ENCODE measurements at regions of chr2 and their contacts with region 1.

Region 1: DNA sequence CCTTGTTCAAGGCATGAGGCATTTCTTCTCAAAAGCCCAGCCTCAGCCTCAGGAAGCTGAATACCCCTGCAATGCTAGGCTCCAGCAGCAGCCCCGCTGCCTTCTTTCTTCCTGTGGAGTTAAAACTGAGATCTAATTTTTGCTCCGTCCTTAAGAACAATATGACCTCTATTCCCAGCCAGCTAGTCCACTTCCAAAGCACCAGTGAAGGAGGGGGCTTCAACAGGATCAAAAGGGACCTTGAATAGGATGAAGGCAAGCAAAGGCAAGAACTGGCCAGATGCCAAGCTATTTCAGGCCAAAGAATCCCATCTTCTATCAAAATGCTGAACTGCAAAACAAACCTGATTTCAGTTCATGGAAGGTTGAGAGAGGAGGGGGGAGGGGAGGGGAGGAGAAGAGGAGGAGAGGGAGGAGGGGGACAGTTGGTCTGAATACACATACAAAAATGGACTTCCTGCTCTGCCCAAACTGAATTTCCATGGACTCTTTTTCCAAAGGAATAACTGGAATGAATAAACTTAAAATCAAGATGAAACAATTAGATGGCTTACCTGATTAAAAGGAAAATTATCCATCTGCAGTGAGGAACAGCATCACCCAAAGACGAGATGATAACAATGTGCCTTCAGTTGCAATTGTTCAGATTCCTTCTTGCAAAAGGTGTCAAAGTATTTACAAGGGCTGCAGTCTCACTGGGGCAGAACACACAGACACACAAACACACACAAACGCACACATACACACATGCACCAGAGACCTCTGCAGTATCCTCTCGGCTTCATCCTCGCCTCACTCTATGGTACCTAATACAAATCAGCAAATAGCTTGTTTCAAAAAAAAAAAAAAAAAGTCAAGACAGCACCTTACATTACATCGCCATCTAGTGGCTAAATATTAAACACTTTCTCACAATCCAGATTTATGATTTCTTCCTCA is at the start of gene SCN1A:
- DNase-seq: no peak
- H3K4me3 ChIP-seq: no peak within 1 kb of the TSS
- H3K27ac ChIP-seq: no peak within 1 kb of the TSS
- H3K4me1 ChIP-seq: peaks cover 0 to 18% (median 9%) of the 10 kb centered on the region in 4 donors
- H3K27me3 ChIP-seq: no peaks in the 10 kb centered on the region
- CTCF ChIP-seq: peak in 2 of 4 experiments; percentile 31 to 53
- EP300 ChIP-seq: no peak
- POLR2A ChIP-seq: no peak
- total RNA-seq, gene SCN1A: under 0.01 to 0.36 (median 0.23) TPM

Region 2: DNA sequence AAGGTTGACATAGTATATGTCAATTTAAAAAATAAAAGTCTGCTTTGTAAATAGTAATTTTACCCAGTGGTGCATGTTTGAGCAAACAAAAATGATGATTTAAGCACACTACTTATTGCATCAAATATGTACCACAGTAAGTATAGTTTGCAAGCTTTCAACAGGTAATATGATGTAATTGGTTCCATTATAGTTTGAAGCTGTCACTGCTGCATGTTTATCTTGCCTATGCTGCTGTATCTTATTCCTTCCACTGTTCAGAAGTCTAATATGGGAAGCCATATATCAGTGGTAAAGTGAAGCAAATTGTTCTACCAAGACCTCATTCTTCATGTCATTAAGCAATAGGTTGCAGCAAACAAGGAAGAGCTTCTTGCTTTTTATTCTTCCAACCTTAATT is 736.6 kb before region 1 on chr2:
- intact Hi-C with region 1: loop called (anchors 10 kb)
- DNase-seq: no peak
- H3K4me3 ChIP-seq: no peak overlapping the region
- H3K27ac ChIP-seq: no peak overlapping the region
- H3K4me1 ChIP-seq: no peaks in the 10 kb centered on the region
- H3K27me3 ChIP-seq: no peaks in the 10 kb centered on the region
- CTCF ChIP-seq: no peak
- EP300 ChIP-seq: no peak
- POLR2A ChIP-seq: no peak

Region 3: GRCh38 chr2:165953655-165954606 is 173.6 kb before region 1 on chr2 and contains the start of gene TTC21B:
- intact Hi-C with region 1: loop called (anchors 2 kb)
- DNase-seq: peak; percentile 96
- H3K4me3 ChIP-seq: peak within 1 kb of the TSS; percentile 68 to 88 (median 76)
- H3K27ac ChIP-seq: peak within 1 kb of the TSS; percentile 85 to 91 (median 89)
- H3K4me1 ChIP-seq: peaks cover 0 to 41% (median 23%) of the 10 kb centered on the region in 4 donors
- H3K27me3 ChIP-seq: no peaks in the 10 kb centered on the region
- CTCF ChIP-seq: peak; percentile 67 to 81 (median 74)
- EP300 ChIP-seq: peak in 1 of 4 donors; percentile 33
- POLR2A ChIP-seq: peak; percentile 44 to 45
- total RNA-seq, gene TTC21B: 15.6 to 33.5 (median 28.8) TPM

Region 4: DNA sequence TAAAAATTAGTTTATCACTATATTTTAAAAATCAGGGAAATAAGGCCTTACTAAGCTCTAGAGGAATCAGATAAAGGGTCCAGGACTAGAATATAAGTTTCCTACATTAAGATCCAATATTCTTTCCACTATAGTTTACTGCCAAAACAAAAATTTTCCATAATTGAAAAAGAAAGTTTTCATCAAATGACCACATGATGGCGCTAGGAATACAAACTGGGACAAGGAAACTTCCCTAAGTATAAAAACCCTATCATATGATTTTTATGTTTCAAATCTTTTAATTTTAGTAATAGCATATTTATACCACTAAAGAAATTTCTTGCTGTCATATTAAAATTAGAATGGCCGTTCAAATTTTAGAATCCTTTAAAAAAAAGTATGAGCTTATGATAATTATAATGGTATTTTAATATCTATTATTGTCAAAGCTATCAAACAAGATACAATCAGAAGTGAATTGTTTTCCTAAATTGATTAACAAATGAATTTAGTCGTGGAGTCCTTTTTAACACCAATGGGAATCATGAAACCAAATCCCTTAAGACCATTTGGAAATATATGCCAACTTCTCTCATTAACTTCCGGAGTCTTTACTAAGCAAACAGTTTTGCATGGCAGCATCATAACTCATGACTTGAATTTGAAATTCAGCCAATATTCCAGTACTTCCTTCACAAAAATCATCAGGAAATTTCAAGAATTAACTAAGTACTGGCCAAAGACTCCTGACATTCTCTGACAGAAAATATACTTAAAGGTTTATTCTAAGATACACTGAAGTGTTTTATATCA is 69.9 kb before region 1 on chr2:
- intact Hi-C with region 1: loop called (anchors 5 kb)
- DNase-seq: no peak
- H3K4me3 ChIP-seq: no peak overlapping the region
- H3K27ac ChIP-seq: no peak overlapping the region
- H3K4me1 ChIP-seq: no peaks in the 10 kb centered on the region
- H3K27me3 ChIP-seq: no peaks in the 10 kb centered on the region
- CTCF ChIP-seq: peak in 2 of 4 experiments; percentile 5 to 33
- EP300 ChIP-seq: no peak
- POLR2A ChIP-seq: no peak

Measured in sigmoid colon (tissue), 7 donors.